Posterior cingulate gyrus (tissue), 11 donors: ENCODE measurements at regions of chr11 and their contacts with region 1.

Region 1: GRCh38 chr11:65412331-65413076 is 10.1 kb upstream of the NEAT1 start:
- DNase-seq: peak in 5 of 10 donors; percentile 4 to 72 (median 19)

Region 2: GRCh38 chr11:65422691-65423444 is 10.4 kb after region 1 on chr11 and contains the start of gene NEAT1:
- intact Hi-C with region 1: no loop called
- DNase-seq: peak; percentile 85 to 98 (median 94)

Region 3: DNA sequence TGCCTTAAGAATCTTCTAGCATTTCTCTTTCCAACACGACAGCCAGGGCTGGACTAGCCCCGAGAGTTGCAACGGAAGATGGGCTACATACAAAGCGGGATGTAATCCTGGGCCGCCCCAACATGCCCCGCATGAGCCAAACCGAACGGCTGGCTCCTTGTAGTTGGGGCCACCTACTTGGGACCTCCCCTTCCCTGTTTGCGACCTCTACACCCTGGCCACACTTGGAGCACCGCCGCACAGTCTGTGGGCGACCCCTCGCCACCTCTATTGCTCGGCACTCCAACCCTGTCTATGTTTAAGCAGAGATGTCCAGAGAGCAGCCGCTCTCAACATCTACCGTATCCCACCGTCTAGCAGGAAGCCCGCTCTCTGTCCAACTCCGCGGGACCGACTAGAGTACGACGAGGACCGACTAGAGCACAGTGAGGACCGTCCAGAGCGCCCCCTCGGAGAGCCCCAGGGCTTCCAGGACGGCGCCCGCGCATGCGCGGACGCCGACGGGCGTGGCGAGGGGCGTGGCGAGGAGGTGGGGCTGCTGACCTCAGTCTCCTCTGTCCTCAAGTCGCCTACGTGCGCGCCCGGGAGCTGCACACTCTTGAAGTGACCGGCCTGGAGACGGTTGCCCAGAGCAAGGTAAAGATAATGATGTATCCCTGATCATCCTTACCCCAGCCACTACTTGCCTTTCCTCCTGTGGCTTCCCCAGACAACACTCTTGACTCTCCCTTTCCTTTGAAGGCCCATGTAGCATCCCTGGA is 42.4 kb after region 1 on chr11:
- intact Hi-C with region 1: loop called (anchors 2 kb)
- DNase-seq: peak; percentile 73 to 97 (median 84)